ENCODE measurements at regions of chr13 and their contacts with region 1.

Region 1: DNA sequence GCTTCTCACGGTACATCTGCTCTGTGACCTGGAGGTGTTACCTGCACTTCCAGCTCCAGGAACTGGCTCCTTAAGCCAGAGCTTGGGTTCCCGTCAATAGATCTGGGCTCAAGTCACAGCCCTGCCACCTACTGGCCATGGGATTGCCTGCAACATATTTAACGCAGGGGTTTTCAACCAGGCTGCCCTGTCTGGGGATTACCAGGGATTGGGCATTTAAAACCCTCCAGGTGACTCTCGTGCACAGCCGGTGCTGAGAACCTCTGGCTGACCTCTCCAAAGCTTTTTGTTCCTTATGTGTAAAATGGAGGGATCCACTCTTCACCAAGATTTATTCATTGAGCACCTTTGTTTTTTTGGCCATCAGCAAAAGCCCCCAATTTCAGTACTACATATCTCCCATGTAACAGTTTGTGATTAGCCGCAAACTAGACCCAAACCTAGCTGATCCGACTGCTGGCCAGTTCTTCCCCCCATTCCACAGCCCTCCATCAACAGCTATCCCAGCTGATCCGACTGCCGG is 76.6 kb upstream of the STK24 start:
- DNase-seq: peak; percentile 88
- ATAC-seq: peak; percentile 99
- H3K4me3 Mint-ChIP-seq: no peak overlapping the region
- H3K27ac Mint-ChIP-seq: no peak overlapping the region
- H3K4me1 Mint-ChIP-seq: peaks cover 4% of the 10 kb centered on the region
- H3K27me3 Mint-ChIP-seq: peaks cover 2% of the 10 kb centered on the region
- CTCF ChIP-seq: peak; percentile 93

Region 2: GRCh38 chr13:98436233-98436910 is 217.2 kb before region 1 on chr13:
- CTCF ChIA-PET with region 1: interaction called, 20 read pairs
- POLR2A ChIA-PET with region 1: no interaction called
- intact Hi-C with region 1: no loop called
- DNase-seq: no peak
- ATAC-seq: no peak
- H3K4me3 Mint-ChIP-seq: no peak overlapping the region
- H3K27ac Mint-ChIP-seq: no peak overlapping the region
- H3K4me1 Mint-ChIP-seq: no peaks in the 10 kb centered on the region
- H3K27me3 Mint-ChIP-seq: peaks cover 4% of the 10 kb centered on the region
- CTCF ChIP-seq: no peak

Region 3: DNA sequence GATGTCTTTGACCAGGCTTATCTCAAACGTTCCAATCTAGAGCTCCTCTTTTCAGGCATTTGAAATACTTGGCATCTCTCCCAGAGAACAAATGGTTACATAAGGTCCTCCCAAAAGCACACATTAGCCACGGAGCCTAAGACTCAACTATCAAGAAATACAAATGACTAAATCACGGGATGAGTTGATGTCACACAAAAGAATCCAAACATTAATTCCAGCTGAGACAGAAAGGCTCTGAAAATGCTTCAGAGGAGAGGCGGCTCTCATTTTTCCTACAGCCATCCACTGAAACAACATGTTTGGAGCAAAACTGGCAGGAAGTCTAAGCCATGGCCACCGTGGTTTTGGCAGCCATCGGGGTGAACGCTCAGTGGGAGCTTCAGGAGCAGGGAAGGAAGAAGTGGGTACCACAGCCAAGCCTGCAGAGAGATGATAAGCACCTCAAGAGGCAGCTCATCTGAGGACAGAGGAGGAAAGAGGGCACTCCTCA is 199.1 kb before region 1 on chr13:
- CTCF ChIA-PET with region 1: interaction called, 34 read pairs
- POLR2A ChIA-PET with region 1: no interaction called
- intact Hi-C with region 1: no loop called
- DNase-seq: no peak
- ATAC-seq: no peak
- H3K4me3 Mint-ChIP-seq: no peak overlapping the region
- H3K27ac Mint-ChIP-seq: peak overlapping the region; percentile 41
- H3K4me1 Mint-ChIP-seq: peaks cover 23% of the 10 kb centered on the region
- H3K27me3 Mint-ChIP-seq: no peaks in the 10 kb centered on the region
- CTCF ChIP-seq: no peak

Region 4: GRCh38 chr13:98476538-98476966 is 177.0 kb before region 1 on chr13:
- CTCF ChIA-PET with region 1: interaction called, 18 read pairs
- POLR2A ChIA-PET with region 1: no interaction called
- intact Hi-C with region 1: no loop called
- DNase-seq: peak; percentile 96
- ATAC-seq: peak; percentile 85
- H3K4me3 Mint-ChIP-seq: peak overlapping the region; percentile 56
- H3K27ac Mint-ChIP-seq: peak overlapping the region; percentile 81
- H3K4me1 Mint-ChIP-seq: peaks cover 72% of the 10 kb centered on the region
- H3K27me3 Mint-ChIP-seq: no peaks in the 10 kb centered on the region
- CTCF ChIP-seq: no peak

Region 5: DNA sequence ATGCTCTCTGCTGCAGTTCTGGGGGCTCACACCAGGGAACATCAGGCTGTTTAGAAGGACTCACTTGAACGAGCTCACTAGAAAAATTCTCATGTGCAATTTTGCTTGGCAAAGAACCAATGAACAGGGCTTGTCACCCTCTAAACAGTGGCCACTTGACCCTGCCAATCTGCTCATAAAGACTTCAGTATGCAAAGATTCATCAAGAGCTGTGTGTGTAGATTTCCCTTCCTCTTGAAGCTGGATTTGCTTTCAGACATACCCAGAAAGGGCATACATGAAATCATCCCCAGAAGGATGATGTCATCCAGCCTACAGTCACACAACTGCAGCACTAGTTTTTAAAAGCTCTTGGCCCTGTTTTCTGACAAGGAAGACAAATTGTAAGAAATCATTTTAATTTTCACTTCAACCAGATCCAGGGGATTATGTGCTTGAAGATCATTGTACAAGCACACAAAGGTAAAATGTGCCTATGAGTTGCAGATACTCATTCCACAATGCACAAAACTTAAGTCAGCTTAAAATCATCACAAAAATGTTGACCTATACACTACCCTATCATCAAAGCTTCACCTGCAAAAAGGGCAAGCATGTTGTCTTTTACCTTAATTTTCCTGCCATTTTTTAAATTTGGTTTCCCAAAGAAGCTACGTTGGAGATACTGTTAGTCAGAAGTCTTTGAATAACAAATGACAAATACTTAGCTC is 71.4 kb before region 1 on chr13:
- CTCF ChIA-PET with region 1: interaction called, 11 read pairs
- POLR2A ChIA-PET with region 1: no interaction called
- intact Hi-C with region 1: no loop called
- DNase-seq: peak; percentile 21
- ATAC-seq: peak; percentile 60
- H3K4me3 Mint-ChIP-seq: no peak overlapping the region
- H3K27ac Mint-ChIP-seq: peak overlapping the region; percentile 22
- H3K4me1 Mint-ChIP-seq: peaks cover 25% of the 10 kb centered on the region
- H3K27me3 Mint-ChIP-seq: no peaks in the 10 kb centered on the region
- CTCF ChIP-seq: no peak

Region 6: GRCh38 chr13:98641075-98641474 is 12.4 kb before region 1 on chr13:
- CTCF ChIA-PET with region 1: interaction called, 17 read pairs
- POLR2A ChIA-PET with region 1: no interaction called
- intact Hi-C with region 1: no loop called
- DNase-seq: no peak
- ATAC-seq: no peak
- H3K4me3 Mint-ChIP-seq: no peak overlapping the region
- H3K27ac Mint-ChIP-seq: no peak overlapping the region
- H3K4me1 Mint-ChIP-seq: no peaks in the 10 kb centered on the region
- H3K27me3 Mint-ChIP-seq: peaks cover 2% of the 10 kb centered on the region
- CTCF ChIP-seq: no peak

Region 7: DNA sequence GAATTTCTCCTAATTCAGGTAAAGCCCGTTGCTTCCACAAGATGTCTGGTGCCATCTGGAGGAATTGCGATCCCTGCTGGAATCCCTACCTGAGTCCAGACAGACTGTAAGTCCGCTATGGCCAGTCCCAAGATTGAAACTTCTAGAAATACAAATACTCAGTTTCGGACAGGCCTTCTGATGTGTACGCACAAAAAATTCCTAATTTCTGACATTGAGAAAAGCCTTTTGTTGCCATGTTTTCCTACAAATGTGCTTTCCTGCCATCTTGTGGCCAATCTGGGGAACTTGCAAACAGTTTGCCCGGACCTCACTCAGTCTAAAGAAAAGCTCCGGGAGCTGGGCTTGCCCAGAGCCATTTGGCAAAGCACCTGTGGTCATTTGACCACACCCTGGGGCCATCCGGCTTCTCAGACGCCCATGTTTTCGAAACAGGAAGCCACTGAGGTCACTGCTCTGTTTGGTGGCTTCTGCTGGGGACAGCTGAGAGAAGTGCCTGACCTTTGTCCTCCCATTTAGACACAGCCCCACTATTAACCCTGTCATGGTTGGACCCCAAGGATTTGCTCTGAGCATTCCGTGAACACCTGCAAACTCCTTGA is 19.5 kb after region 1 on chr13:
- CTCF ChIA-PET with region 1: interaction called, 33 read pairs
- POLR2A ChIA-PET with region 1: no interaction called
- intact Hi-C with region 1: no loop called
- DNase-seq: peak; percentile 58
- ATAC-seq: peak; percentile 84
- H3K4me3 Mint-ChIP-seq: no peak overlapping the region
- H3K27ac Mint-ChIP-seq: no peak overlapping the region
- H3K4me1 Mint-ChIP-seq: no peaks in the 10 kb centered on the region
- H3K27me3 Mint-ChIP-seq: no peaks in the 10 kb centered on the region
- CTCF ChIP-seq: peak; percentile 92

Measured in activated CD8-positive, alpha-beta T cell treated with anti-CD3 and anti-CD28 coated beads for 36 hours (primary cell).